ENCODE measurements at regions of chr12 and their contacts with region 1.

Region 1: GRCh38 chr12:77925536-77926108 is 94.9 kb downstream of the NAV3 start:
- DNase-seq: peak; percentile 66
- H3K27ac ChIP-seq: no peak overlapping the region
- CTCF ChIP-seq: peak; percentile 98

Region 2: DNA sequence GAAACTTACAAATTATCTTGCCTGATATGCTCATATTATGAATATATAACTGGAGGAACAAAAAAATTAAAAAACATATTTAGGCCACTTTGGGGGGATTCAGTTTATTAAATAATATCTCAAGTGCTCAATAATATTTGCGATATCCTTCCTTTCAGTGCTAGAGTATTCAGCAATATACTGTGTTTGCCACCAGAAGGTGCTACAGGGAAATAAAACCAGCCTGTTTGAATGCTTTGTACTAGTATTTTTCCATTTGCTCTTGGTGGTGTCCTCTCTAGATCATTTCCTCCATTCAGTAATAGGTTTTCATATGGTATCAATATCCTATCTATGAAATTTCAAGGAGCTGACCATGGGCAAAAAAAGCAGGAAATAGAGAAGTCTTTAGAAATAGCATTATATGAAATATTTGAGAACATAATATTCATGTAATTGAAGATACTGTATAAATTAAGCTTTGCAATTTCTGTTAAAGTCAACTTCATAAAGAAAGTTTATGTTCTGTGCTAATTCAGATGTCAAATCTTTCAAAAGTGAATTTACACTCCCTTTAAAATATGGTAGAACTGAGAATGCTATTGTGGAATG is 201.2 kb before region 1 on chr12:
- CTCF ChIA-PET with region 1: interaction called, 16 read pairs
- POLR2A ChIA-PET with region 1: no interaction called
- DNase-seq: peak; percentile 11
- H3K27ac ChIP-seq: no peak overlapping the region
- CTCF ChIP-seq: peak; percentile 69

Region 3: GRCh38 chr12:77734214-77734883 is 191.3 kb before region 1 on chr12:
- CTCF ChIA-PET with region 1: interaction called, 10 read pairs
- POLR2A ChIA-PET with region 1: no interaction called
- DNase-seq: no peak
- H3K27ac ChIP-seq: no peak overlapping the region
- CTCF ChIP-seq: no peak